SK-N-SH (cell line): ENCODE measurements at regions of chr1 and their contacts with region 1.

Region 1: GRCh38 chr1:90729504-90730242 is 12.6 kb upstream of the BARHL2 start:
- DNase-seq: peak; percentile 90
- H3K4me3 ChIP-seq: peak overlapping the region in 1 of 2 experiments; percentile 54; a peak in 2 of 4 replicates
- H3K27ac ChIP-seq: no peak overlapping the region
- H3K4me1 ChIP-seq: peaks cover 0 to 15% of the 10 kb centered on the region in 2 experiments; a peak in 1 of 4 replicates
- H3K27me3 ChIP-seq: peaks cover 84% of the 10 kb centered on the region
- CTCF ChIP-seq: peak; percentile 59
- EP300 ChIP-seq: no peak
- RAD21 ChIP-seq: peak; percentile 41

Region 2: DNA sequence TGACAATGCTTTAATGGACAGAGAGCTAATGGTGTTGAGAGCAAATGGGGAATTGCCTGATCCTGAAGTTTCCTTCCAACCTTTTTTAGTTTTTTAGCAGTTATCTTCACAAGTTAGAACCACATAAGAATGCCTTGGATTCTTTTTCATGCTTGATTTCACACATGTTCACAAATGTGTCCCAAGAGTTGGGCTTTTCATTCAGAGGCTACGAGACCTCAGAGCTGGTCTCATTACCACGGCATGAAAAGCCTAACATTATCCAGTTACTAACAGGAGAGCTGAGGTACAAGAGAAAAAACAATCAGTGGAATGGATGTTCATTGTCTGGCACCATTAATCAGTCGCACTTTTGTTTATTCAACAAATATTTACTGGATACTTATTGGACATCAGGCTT is 394.1 kb before region 1 on chr1:
- CTCF ChIA-PET with region 1: no interaction called
- POLR2A ChIA-PET with region 1: no interaction called
- DNase-seq: no peak
- H3K4me3 ChIP-seq: no peak overlapping the region
- H3K27ac ChIP-seq: no peak overlapping the region
- H3K4me1 ChIP-seq: no peaks in the 10 kb centered on the region; a peak in 1 of 4 replicates
- H3K27me3 ChIP-seq: no peaks in the 10 kb centered on the region
- CTCF ChIP-seq: no peak
- EP300 ChIP-seq: no peak
- RAD21 ChIP-seq: no peak

Region 3: DNA sequence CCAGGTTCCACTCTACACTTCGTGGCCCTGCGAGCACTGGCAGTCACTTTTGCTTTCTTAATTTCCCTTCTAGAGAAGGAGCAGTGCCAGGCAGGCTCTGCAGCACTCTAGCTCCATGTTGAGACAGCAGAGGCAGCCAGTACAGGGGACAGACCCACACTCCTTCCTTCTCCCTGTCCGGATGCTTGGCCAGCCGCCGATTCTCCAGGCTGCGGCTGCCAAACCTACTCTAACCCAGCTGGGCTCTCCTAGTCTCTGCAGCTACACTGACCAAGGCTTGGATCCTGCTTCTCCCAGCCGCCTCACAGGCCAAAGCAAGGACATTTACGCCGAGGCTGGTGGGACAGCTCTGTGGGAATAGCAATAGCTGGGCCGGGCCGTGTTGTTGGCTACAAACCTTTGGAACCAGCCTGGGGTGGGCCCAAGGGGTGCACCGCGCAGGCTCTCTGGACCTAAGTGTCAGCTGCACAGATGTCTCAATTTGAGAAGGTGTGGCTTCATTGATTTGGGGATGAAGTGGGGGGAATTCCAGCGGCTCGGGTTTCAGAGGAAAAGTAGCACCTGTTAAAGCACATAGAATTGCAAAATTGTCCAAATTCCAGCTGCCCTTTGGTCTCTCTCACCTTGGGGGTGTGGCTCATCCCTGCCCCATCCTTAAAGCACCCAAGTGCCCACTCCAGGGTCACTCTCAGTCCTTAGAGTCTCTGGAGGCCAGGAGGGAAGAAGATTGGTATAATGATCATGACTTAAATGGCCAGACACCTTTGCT is 15.7 kb before region 1 on chr1:
- CTCF ChIA-PET with region 1: interaction called, 51 read pairs
- POLR2A ChIA-PET with region 1: no interaction called
- DNase-seq: no peak
- H3K4me3 ChIP-seq: no peak overlapping the region
- H3K27ac ChIP-seq: no peak overlapping the region
- H3K4me1 ChIP-seq: no peaks in the 10 kb centered on the region; a peak in 1 of 4 replicates
- H3K27me3 ChIP-seq: peaks cover 90% of the 10 kb centered on the region
- CTCF ChIP-seq: no peak
- EP300 ChIP-seq: no peak
- RAD21 ChIP-seq: no peak

Region 4: GRCh38 chr1:90964444-90965035 is 234.9 kb after region 1 on chr1:
- CTCF ChIA-PET with region 1: interaction called, 15 read pairs
- POLR2A ChIA-PET with region 1: no interaction called
- DNase-seq: no peak
- H3K4me3 ChIP-seq: no peak overlapping the region
- H3K27ac ChIP-seq: no peak overlapping the region
- H3K4me1 ChIP-seq: no peaks in the 10 kb centered on the region; a peak in 1 of 4 replicates
- H3K27me3 ChIP-seq: no peaks in the 10 kb centered on the region
- CTCF ChIP-seq: peak; percentile 67
- EP300 ChIP-seq: no peak
- RAD21 ChIP-seq: peak; percentile 74